ENCODE measurements at regions of chr1 and their contacts with region 1.

Region 1: GRCh38 chr1:19439464-19440171 is 45.7 kb downstream of the CAPZB start:
- DNase-seq: no peak
- H3K4me3 ChIP-seq: no peak overlapping the region
- H3K27ac ChIP-seq: no peak overlapping the region
- H3K4me1 ChIP-seq: peaks cover 2 to 11% (median 9%) of the 10 kb centered on the region in 4 experiments
- H3K27me3 ChIP-seq: no peaks in the 10 kb centered on the region
- CTCF ChIP-seq: peak; percentile 56 to 68 (median 66)
- EP300 ChIP-seq: no peak
- POLR2A ChIP-seq: no peak
- RAD21 ChIP-seq: peak; percentile 78 to 81

Region 2: DNA sequence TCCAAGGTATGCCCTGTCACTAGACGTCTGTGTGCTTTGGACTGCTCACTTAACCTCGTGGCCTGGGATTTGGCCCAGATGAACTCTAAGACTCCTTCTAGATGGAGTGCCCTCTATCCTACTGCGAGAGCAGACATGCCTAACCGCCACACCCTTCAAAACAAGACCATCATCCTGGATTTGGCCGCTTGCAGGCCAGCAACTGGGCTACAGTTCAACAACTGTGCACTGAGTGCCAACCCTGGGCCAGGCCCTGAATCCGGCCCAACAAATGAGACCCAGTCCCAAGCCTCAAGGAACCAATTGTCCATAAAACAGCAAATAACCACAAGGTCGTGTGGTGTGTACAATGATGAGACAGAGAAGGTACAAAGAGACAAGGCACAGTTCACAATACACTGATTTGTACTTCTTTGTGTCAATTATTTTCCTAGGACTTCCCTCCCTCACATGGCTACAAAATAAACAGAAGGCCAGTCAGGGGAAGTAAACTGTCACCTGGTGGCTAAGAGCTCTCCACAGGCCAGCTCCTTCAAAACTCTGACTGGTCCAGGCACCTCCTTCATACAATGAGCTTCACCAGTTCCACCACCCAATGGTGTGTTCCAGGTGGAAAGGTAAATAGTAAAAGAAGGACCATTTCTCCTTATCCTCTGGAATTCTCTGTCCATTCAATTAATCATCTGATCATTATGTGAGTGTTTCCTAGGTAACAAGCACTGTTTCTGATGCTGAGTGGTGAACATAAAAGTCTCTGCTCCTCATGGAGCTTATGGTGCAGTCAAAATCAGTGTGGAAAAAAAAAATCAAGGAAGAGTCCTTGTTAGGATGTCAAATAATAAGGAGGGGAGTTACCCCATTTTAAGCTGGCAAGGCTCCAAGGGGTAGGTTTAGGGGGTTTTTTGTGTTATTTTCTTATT is 14.7 kb before region 1 on chr1:
- CTCF ChIA-PET with region 1: interaction called, 11 read pairs
- POLR2A ChIA-PET with region 1: interaction called, 3 read pairs
- DNase-seq: no peak
- H3K4me3 ChIP-seq: no peak overlapping the region
- H3K27ac ChIP-seq: no peak overlapping the region
- H3K4me1 ChIP-seq: peaks cover 0 to 3% (median 0%) of the 10 kb centered on the region in 4 experiments; a peak in 1 of 7 replicates
- H3K27me3 ChIP-seq: no peaks in the 10 kb centered on the region
- CTCF ChIP-seq: no peak
- EP300 ChIP-seq: no peak
- POLR2A ChIP-seq: no peak
- RAD21 ChIP-seq: no peak